ENCODE measurements at regions of chr6 and their contacts with region 1.

Region 1: GRCh38 chr6:27132532-27133280 is 114.8 kb upstream of the PRSS16 start:
- DNase-seq: peak; percentile 99
- H3K4me3 Mint-ChIP-seq: no peak overlapping the region
- H3K27ac Mint-ChIP-seq: no peak overlapping the region
- H3K4me1 Mint-ChIP-seq: peaks cover 11% of the 10 kb centered on the region
- H3K27me3 Mint-ChIP-seq: no peaks in the 10 kb centered on the region
- CTCF ChIP-seq: no peak

Region 2: DNA sequence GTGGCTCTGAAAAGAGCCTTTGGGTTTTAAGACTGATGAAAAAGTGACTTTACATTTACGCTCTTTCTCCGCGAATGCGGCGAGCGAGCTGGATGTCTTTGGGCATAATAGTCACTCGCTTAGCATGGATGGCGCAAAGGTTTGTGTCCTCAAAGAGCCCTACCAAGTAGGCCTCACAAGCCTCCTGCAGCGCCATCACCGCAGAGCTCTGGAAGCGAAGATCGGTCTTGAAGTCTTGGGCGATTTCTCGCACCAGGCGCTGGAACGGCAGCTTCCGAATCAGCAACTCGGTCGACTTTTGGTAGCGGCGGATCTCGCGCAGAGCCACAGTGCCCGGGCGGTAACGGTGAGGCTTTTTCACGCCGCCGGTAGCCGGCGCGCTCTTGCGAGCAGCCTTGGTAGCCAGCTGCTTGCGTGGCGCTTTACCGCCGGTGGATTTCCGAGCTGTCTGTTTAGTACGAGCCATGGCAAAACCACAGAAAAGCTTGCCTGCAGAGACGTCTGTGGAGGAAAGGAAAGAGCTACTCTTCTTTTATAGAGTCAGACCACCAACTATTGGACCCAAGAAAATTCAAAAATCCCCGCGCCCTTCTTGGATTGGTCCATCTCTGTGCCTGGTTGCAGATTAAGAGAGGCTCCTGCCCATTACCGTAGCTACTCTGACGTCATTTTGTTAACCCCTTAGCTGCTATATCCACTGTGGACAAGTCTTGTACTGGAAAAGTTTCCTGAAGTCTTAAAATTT is 1100.9 kb before region 1 on chr6:
- CTCF ChIA-PET with region 1: no interaction called
- POLR2A ChIA-PET with region 1: interaction called, 25 read pairs
- intact Hi-C with region 1: no loop called
- DNase-seq: peak; percentile 99
- H3K4me3 Mint-ChIP-seq: peak overlapping the region; percentile 81
- H3K27ac Mint-ChIP-seq: peak overlapping the region; percentile 97
- H3K4me1 Mint-ChIP-seq: peaks cover 25% of the 10 kb centered on the region
- H3K27me3 Mint-ChIP-seq: no peaks in the 10 kb centered on the region
- CTCF ChIP-seq: peak; percentile 12

Region 3: GRCh38 chr6:26183581-26184366 is 948.9 kb before region 1 on chr6:
- CTCF ChIA-PET with region 1: interaction called, 4 read pairs
- POLR2A ChIA-PET with region 1: interaction called, 14 read pairs
- intact Hi-C with region 1: no loop called
- DNase-seq: peak; percentile 56
- H3K4me3 Mint-ChIP-seq: peak overlapping the region; percentile 79
- H3K27ac Mint-ChIP-seq: peak overlapping the region; percentile 84
- H3K4me1 Mint-ChIP-seq: peaks cover 27% of the 10 kb centered on the region
- H3K27me3 Mint-ChIP-seq: no peaks in the 10 kb centered on the region
- CTCF ChIP-seq: no peak

Region 4: GRCh38 chr6:26249957-26250697 is 882.6 kb before region 1 on chr6:
- CTCF ChIA-PET with region 1: no interaction called
- POLR2A ChIA-PET with region 1: interaction called, 14 read pairs
- intact Hi-C with region 1: no loop called
- DNase-seq: peak; percentile 87
- H3K4me3 Mint-ChIP-seq: peak overlapping the region; percentile 94
- H3K27ac Mint-ChIP-seq: peak overlapping the region; percentile 63
- H3K4me1 Mint-ChIP-seq: peaks cover 7% of the 10 kb centered on the region
- H3K27me3 Mint-ChIP-seq: no peaks in the 10 kb centered on the region
- CTCF ChIP-seq: peak; percentile 42

Region 5: DNA sequence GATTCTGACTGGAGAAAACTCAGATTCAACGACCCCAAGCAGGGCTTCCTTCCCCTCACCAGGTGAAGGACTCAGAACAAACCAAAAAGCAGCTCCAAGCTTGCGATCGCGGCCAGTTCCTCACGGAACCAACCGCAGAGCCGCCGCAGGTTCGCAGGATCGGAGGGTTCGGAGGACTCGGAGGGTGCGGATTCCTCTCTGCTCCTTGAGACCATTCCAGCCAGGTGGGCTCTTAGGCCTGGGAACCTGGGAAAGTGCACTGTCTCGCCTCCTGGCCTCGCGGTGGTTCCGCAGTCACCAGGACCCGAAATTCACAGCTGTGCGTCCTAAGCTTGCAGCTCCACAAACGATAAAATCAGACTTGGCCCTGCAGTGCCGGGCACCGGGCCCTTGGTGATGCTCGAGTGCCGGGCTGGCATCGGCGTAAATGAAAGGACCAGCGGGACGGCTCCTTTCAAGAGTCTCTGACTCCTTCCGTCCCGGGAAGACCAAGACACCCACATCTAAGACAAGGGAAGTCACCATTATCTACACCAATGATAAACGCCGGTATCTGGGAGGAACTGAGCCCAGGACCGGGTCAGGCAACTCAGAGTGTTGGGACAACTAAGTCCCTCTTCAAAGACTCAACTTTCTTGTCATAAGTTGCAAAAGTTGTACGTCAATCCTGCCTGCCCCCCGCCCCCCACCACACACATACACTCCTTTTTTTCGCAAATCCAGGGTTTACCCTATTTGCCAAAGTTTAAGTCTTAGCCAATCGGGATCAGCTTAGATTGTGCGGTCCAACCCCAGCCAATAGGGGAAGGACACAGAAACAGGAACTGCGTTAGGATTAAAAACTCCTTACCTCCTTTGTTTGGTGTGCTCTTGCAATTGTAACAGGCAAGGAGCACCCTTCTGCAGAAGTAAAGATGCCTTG is 45.0 kb after region 1 on chr6:
- CTCF ChIA-PET with region 1: interaction called, 3 read pairs
- POLR2A ChIA-PET with region 1: interaction called, 30 read pairs
- intact Hi-C with region 1: no loop called
- DNase-seq: peak; percentile 92
- H3K4me3 Mint-ChIP-seq: peak overlapping the region; percentile 87
- H3K27ac Mint-ChIP-seq: peak overlapping the region; percentile 92
- H3K4me1 Mint-ChIP-seq: no peaks in the 10 kb centered on the region
- H3K27me3 Mint-ChIP-seq: no peaks in the 10 kb centered on the region
- CTCF ChIP-seq: peak; percentile 36

Region 6: GRCh38 chr6:27388293-27389197 is 255.8 kb after region 1 on chr6 and contains the start of gene ZNF391:
- CTCF ChIA-PET with region 1: no interaction called
- POLR2A ChIA-PET with region 1: no interaction called
- intact Hi-C with region 1: no loop called
- DNase-seq: peak; percentile 75
- H3K4me3 Mint-ChIP-seq: peak within 1 kb of the TSS; percentile 92
- H3K27ac Mint-ChIP-seq: peak within 1 kb of the TSS; percentile 90
- H3K4me1 Mint-ChIP-seq: peaks cover 12% of the 10 kb centered on the region
- H3K27me3 Mint-ChIP-seq: no peaks in the 10 kb centered on the region
- CTCF ChIP-seq: no peak
- total RNA-seq, gene ZNF391: 6.2 and 8.3 TPM in 2 replicates

Region 7: GRCh38 chr6:27838058-27838944 is 705.6 kb after region 1 on chr6:
- CTCF ChIA-PET with region 1: interaction called, 3 read pairs
- POLR2A ChIA-PET with region 1: interaction called, 82 read pairs
- intact Hi-C with region 1: no loop called
- DNase-seq: peak; percentile 98
- H3K4me3 Mint-ChIP-seq: no peak overlapping the region
- H3K27ac Mint-ChIP-seq: no peak overlapping the region
- H3K4me1 Mint-ChIP-seq: peaks cover 32% of the 10 kb centered on the region
- H3K27me3 Mint-ChIP-seq: no peaks in the 10 kb centered on the region
- CTCF ChIP-seq: no peak

Region 8: GRCh38 chr6:27871924-27872638 is 739.4 kb after region 1 on chr6:
- CTCF ChIA-PET with region 1: no interaction called
- POLR2A ChIA-PET with region 1: interaction called, 25 read pairs
- intact Hi-C with region 1: no loop called
- DNase-seq: peak; percentile 89
- H3K4me3 Mint-ChIP-seq: peak overlapping the region; percentile 79
- H3K27ac Mint-ChIP-seq: peak overlapping the region; percentile 93
- H3K4me1 Mint-ChIP-seq: peaks cover 2% of the 10 kb centered on the region
- H3K27me3 Mint-ChIP-seq: no peaks in the 10 kb centered on the region
- CTCF ChIP-seq: no peak

Measured in MCF 10A (cell line).